Activated naive CD4-positive, alpha-beta T cell treated with anti-CD3 and anti-CD28 coated beads for 36 hours (primary cell): ENCODE measurements at regions of chr16 and their contacts with region 1.

Region 1: GRCh38 chr16:84617791-84618580 is at the start of gene COTL1:
- DNase-seq: peak; percentile 96
- H3K4me3 Mint-ChIP-seq: peak within 1 kb of the TSS; percentile 96
- H3K27ac Mint-ChIP-seq: peak within 1 kb of the TSS; percentile 77
- H3K4me1 Mint-ChIP-seq: peaks cover 35% of the 10 kb centered on the region
- H3K27me3 Mint-ChIP-seq: no peaks in the 10 kb centered on the region
- total RNA-seq, gene COTL1: 325 to 328 TPM

Region 2: DNA sequence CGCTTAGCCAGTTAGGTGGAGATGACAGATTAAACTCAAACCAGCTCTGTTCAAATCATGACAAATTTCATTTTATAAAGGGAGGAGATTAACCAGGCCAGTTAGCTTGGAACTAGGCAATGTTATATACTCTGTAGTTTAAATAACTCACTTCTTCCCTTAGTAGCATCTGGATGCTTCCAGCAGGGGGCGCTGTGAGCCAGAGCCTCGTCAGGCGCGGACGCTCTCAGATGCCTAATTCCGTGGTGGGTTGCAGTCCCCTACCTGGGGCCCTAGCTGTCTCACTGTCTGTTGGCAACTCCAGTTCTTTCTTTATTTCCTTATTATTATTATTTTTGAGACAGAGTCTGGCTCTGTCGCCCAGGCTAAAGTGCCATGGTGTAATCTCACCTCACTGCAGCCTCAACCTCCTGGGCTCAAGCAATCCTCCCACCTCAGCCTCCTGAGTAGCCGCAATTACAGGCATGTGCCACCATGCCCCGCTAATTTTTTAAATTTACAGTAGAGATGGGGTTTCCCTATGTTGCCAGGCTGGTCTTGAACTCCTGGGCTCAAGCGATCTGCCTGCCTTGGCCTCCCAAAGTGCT is 340.7 kb before region 1 on chr16:
- CTCF ChIA-PET with region 1: interaction called, 5 read pairs
- intact Hi-C with region 1: loop called (anchors 2 kb)
- DNase-seq: peak; percentile 86
- H3K4me3 Mint-ChIP-seq: no peak overlapping the region
- H3K27ac Mint-ChIP-seq: no peak overlapping the region
- H3K4me1 Mint-ChIP-seq: no peaks in the 10 kb centered on the region
- H3K27me3 Mint-ChIP-seq: no peaks in the 10 kb centered on the region

Region 3: GRCh38 chr16:84548971-84549844 is 68.8 kb before region 1 on chr16:
- CTCF ChIA-PET with region 1: interaction called, 14 read pairs
- intact Hi-C with region 1: loop called (anchors 1 kb)
- DNase-seq: peak; percentile 65
- H3K4me3 Mint-ChIP-seq: peak overlapping the region; percentile 86
- H3K27ac Mint-ChIP-seq: peak overlapping the region; percentile 97
- H3K4me1 Mint-ChIP-seq: peaks cover 62% of the 10 kb centered on the region
- H3K27me3 Mint-ChIP-seq: no peaks in the 10 kb centered on the region

Region 4: GRCh38 chr16:84599521-84600202 is 18.3 kb before region 1 on chr16:
- CTCF ChIA-PET with region 1: interaction called, 18 read pairs
- intact Hi-C with region 1: loop called (anchors 1 kb)
- DNase-seq: peak; percentile 83
- H3K4me3 Mint-ChIP-seq: peak overlapping the region; percentile 75
- H3K27ac Mint-ChIP-seq: peak overlapping the region; percentile 90
- H3K4me1 Mint-ChIP-seq: peaks cover 91% of the 10 kb centered on the region
- H3K27me3 Mint-ChIP-seq: no peaks in the 10 kb centered on the region

Region 5: DNA sequence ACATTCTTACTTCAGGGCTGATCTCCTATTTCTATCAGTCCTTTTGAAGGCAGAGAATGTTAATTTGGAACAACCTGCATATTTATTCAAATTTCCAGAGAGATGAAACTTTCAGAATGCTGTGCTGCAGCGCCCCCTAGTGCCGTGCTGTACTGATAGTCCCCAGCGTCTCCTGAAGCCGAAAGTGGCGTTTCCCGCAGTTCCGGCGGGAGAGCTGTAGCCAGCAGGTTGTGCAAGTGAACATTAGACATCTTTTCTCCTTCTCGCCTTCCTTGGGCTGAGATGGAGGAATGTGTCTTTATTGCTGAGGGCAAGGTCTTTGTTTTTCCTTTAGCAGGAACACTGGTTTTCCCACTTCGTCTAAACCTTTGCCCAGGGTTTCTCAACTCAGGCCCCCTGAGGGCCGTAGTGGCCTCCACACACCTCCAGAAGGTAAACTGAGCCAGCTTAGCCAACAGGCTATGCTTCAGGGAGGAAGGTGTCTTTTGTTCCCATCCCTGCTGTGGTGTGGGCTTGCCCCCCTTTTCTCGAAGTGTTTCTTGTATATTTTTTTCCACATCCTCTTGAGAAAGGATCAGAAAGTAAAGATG is 108.2 kb after region 1 on chr16:
- CTCF ChIA-PET with region 1: interaction called, 22 read pairs
- intact Hi-C with region 1: loop called (anchors 1 kb)
- DNase-seq: peak; percentile 91
- H3K4me3 Mint-ChIP-seq: no peak overlapping the region
- H3K27ac Mint-ChIP-seq: no peak overlapping the region
- H3K4me1 Mint-ChIP-seq: peaks cover 74% of the 10 kb centered on the region
- H3K27me3 Mint-ChIP-seq: no peaks in the 10 kb centered on the region

Region 6: GRCh38 chr16:84970447-84971127 is 352.6 kb after region 1 on chr16:
- CTCF ChIA-PET with region 1: interaction called, 8 read pairs
- intact Hi-C with region 1: loop called (anchors 1 kb)
- DNase-seq: peak; percentile 86
- H3K4me3 Mint-ChIP-seq: no peak overlapping the region
- H3K27ac Mint-ChIP-seq: no peak overlapping the region
- H3K4me1 Mint-ChIP-seq: peaks cover 5% of the 10 kb centered on the region
- H3K27me3 Mint-ChIP-seq: no peaks in the 10 kb centered on the region